HCT116 (cell line): ENCODE measurements at regions of chr3 and their contacts with region 1.

Region 1: DNA sequence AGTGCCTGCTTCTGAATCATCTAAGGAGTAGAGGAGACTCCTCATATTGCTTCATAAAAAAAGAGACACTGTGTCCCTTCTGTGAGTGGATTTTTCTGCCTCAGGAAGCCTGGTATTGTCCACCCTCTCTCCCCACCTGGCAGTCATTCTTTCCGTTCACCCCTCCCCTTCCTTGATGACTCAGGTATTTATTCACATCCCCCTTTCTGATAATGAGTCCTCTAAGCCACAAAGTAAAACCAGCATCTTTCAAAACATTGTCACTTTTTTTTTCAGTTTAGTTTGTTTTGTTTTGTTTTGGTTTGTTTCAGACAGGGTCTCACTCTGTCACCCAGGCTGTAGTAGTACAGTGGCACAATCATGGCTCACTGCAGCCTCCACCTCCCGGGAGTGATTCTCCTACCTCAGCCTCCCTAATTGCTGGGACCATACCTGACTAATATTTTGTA is 65.2 kb upstream of the UBE2E1 start:
- DNase-seq: peak; percentile 86
- ATAC-seq: peak; percentile 56
- H3K4me3 ChIP-seq: peak overlapping the region; percentile 33 to 46
- H3K27ac ChIP-seq: peak overlapping the region; percentile 81
- H3K4me1 ChIP-seq: peaks cover 42 to 79% of the 10 kb centered on the region in 2 experiments
- H3K27me3 ChIP-seq: no peaks in the 10 kb centered on the region
- CTCF ChIP-seq: no peak
- POLR2A ChIP-seq: no peak
- RAD21 ChIP-seq: peak; percentile 19; the same call in 1 of the 2 replicates

Region 2: DNA sequence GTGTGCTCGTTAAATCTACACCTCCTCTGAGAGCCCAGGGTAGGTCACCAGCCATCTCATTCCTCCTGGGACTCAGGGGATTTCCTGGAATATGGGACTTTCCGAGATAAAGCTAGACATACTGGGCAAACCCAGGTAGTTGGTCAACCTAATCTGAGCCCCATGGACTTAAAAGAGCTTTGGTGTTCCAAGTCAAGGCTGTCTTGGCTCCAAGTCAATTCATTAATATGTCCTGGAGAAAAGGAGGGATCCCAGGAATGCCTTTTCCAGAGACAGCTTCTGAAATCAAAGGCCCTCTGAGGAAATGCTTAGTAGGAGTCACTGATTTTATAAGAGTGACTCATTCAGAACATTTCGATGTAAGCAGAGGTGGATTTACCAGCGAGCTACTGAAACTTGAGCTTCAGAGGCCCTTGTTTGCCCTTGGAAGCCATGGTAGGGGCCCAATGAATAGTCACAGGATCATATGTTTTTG is 72.1 kb before region 1 on chr3:
- CTCF ChIA-PET with region 1: no interaction called
- POLR2A ChIA-PET with region 1: no interaction called
- RAD21 ChIA-PET with region 1: no interaction called
- intact Hi-C with region 1: loop called (anchors 5 kb)
- DNase-seq: peak; percentile 95
- ATAC-seq: peak; percentile 76
- H3K4me3 ChIP-seq: peak overlapping the region in 1 of 2 experiments; percentile 35; a peak in 2 of 4 replicates
- H3K27ac ChIP-seq: peak overlapping the region; percentile 76
- H3K4me1 ChIP-seq: peaks cover 38 to 86% of the 10 kb centered on the region in 2 experiments
- H3K27me3 ChIP-seq: no peaks in the 10 kb centered on the region
- CTCF ChIP-seq: no peak
- POLR2A ChIP-seq: no peak
- RAD21 ChIP-seq: peak; percentile 42

Region 3: DNA sequence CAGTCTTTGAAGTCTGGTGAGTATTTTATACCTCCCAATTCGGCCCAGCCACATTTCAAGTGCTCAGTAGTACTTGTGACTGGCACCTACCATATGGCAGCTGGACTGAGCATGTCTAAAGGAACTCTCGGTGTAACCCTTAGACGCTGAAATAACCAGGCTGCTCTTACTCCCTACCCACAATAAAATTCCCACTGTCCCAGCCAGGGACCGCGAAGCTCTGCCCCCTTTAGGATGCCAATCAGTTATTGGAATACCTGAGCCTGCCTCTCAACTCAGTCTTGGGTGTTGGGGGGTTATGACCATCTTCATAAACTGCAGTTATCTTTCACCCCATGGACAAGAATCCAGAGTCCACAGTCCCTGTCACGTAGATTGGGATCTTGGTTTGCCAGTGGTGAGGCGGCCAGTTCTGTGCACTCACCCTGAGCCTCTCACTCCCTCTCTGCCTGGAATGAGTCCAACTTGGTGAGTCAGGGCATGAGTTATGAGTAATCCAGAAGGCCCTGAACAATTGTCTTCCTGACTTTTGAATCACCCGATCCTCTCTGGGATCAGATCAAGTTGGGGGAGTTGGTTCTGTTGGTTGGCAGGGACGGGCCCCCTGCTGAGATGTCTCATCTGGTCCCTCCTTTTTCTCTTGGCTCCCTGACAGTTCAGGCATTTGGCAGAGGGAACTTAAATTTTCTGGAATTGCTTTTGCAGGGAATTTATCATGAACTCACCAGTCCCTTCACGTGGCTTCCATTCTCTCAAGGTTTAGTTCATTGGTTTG is 54.9 kb before region 1 on chr3:
- CTCF ChIA-PET with region 1: no interaction called
- POLR2A ChIA-PET with region 1: no interaction called
- RAD21 ChIA-PET with region 1: no interaction called
- intact Hi-C with region 1: loop called (anchors 1 kb)
- DNase-seq: peak; percentile 99
- ATAC-seq: peak; percentile 92
- H3K4me3 ChIP-seq: peak overlapping the region; percentile 15 to 43
- H3K27ac ChIP-seq: peak overlapping the region; percentile 73
- H3K4me1 ChIP-seq: peaks cover 21 to 41% of the 10 kb centered on the region in 2 experiments
- H3K27me3 ChIP-seq: no peaks in the 10 kb centered on the region
- CTCF ChIP-seq: 0 out of 6 replicates have a peak, but pooled peaks of 1 of the 3 experiments have one; percentile 20
- POLR2A ChIP-seq: no peak
- RAD21 ChIP-seq: peak; percentile 32